CD4-positive, alpha-beta memory T cell (primary cell): ENCODE measurements at regions of chr12 and their contacts with region 1.

Region 1: GRCh38 chr12:76763743-76764675 is at the start of gene ZDHHC17:
- DNase-seq: peak; percentile 92 to 94 (median 93)
- H3K4me3 ChIP-seq: peak within 1 kb of the TSS; percentile 54 to 78
- H3K4me3 Mint-ChIP-seq: peak within 1 kb of the TSS; percentile 97 to 98 (median 98)
- H3K27ac ChIP-seq: peak within 1 kb of the TSS; percentile 90
- H3K27ac Mint-ChIP-seq: peak within 1 kb of the TSS; percentile 95 to 99 (median 98)
- H3K4me1 ChIP-seq: peaks cover 36% of the 10 kb centered on the region
- H3K4me1 Mint-ChIP-seq: peaks cover 21 to 53% (median 35%) of the 10 kb centered on the region in 4 donors
- H3K27me3 ChIP-seq: no peaks in the 10 kb centered on the region
- H3K27me3 Mint-ChIP-seq: no peaks in the 10 kb centered on the region
- total RNA-seq, gene ZDHHC17: 51.5 to 52.9 TPM

Region 2: GRCh38 chr12:76559400-76560085 is 204.5 kb before region 1 on chr12 and contains the start of gene OSBPL8:
- CTCF ChIA-PET with region 1: interaction called, 3 read pairs
- POLR2A ChIA-PET with region 1: interaction called, 19 read pairs
- intact Hi-C with region 1: loop called (anchors 1 kb)
- DNase-seq: peak; percentile 89 to 94 (median 90)
- H3K4me3 ChIP-seq: peak within 1 kb of the TSS; percentile 95
- H3K4me3 Mint-ChIP-seq: peak within 1 kb of the TSS; percentile 96 to 97 (median 96)
- H3K27ac ChIP-seq: peak within 1 kb of the TSS; percentile 89
- H3K27ac Mint-ChIP-seq: peak within 1 kb of the TSS; percentile 94 to 99 (median 98)
- H3K4me1 ChIP-seq: peaks cover 46% of the 10 kb centered on the region
- H3K4me1 Mint-ChIP-seq: peaks cover 24 to 52% (median 31%) of the 10 kb centered on the region in 4 donors
- H3K27me3 ChIP-seq: no peaks in the 10 kb centered on the region
- H3K27me3 Mint-ChIP-seq: no peaks in the 10 kb centered on the region
- total RNA-seq, gene OSBPL8: 126 to 127 TPM

Region 3: GRCh38 chr12:76777765-76778216 is 13.8 kb after region 1 on chr12:
- CTCF ChIA-PET with region 1: interaction called, 10 read pairs
- POLR2A ChIA-PET with region 1: interaction called, 15 read pairs
- intact Hi-C with region 1: no loop called
- DNase-seq: no peak
- H3K4me3 ChIP-seq: no peak overlapping the region
- H3K4me3 Mint-ChIP-seq: peak overlapping the region in 3 of 8 donors; percentile 24 to 66 (median 42)
- H3K27ac ChIP-seq: no peak overlapping the region
- H3K27ac Mint-ChIP-seq: peak overlapping the region in 3 of 7 donors; percentile 7 to 74 (median 28)
- H3K4me1 ChIP-seq: peaks cover 25% of the 10 kb centered on the region
- H3K4me1 Mint-ChIP-seq: peaks cover 45 to 78% (median 64%) of the 10 kb centered on the region in 4 donors
- H3K27me3 ChIP-seq: no peaks in the 10 kb centered on the region
- H3K27me3 Mint-ChIP-seq: no peaks in the 10 kb centered on the region

Region 4: GRCh38 chr12:76804435-76804976 is 40.5 kb after region 1 on chr12:
- CTCF ChIA-PET with region 1: no interaction called
- POLR2A ChIA-PET with region 1: no interaction called
- intact Hi-C with region 1: no loop called
- DNase-seq: no peak
- H3K4me3 ChIP-seq: no peak overlapping the region
- H3K4me3 Mint-ChIP-seq: no peak overlapping the region
- H3K27ac ChIP-seq: no peak overlapping the region
- H3K27ac Mint-ChIP-seq: peak overlapping the region in 2 of 7 donors; percentile 17 to 44
- H3K4me1 ChIP-seq: peaks cover 7% of the 10 kb centered on the region
- H3K4me1 Mint-ChIP-seq: peaks cover 0 to 17% (median 5%) of the 10 kb centered on the region in 4 donors
- H3K27me3 ChIP-seq: no peaks in the 10 kb centered on the region
- H3K27me3 Mint-ChIP-seq: no peaks in the 10 kb centered on the region